BJ (cell line): ENCODE measurements at regions of chr9 and their contacts with region 1.

Region 1: GRCh38 chr9:73081979-73082657 is 69.5 kb upstream of the ANXA1 start:
- DNase-seq: no peak
- H3K4me3 ChIP-seq: no peak overlapping the region
- H3K27me3 ChIP-seq: no peaks in the 10 kb centered on the region
- CTCF ChIP-seq: peak; percentile 83

Region 2: GRCh38 chr9:72856972-72857623 is 225.0 kb before region 1 on chr9:
- CTCF ChIA-PET with region 1: interaction called, 58 read pairs
- POLR2A ChIA-PET with region 1: no interaction called
- DNase-seq: no peak
- H3K4me3 ChIP-seq: no peak overlapping the region
- H3K27me3 ChIP-seq: no peaks in the 10 kb centered on the region
- CTCF ChIP-seq: peak; percentile 71

Region 3: DNA sequence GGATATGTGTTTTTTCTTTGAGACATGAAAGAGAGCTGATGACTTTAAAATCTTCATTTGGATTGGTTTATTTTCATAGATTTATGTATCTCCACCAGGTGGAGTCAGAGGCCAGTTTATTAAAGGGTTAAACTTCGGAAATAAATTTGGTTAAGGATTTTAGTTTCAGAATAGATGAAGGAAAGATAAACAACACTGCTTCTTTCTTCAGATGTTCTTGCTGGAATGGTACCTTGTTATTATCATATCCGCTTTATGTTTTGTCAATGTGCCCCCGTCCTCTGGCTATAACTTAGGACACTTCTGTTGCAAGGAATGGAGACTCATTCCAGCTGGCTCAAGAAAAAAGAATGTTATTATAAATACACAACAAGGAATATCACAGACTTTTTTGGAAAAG is 210.4 kb before region 1 on chr9:
- CTCF ChIA-PET with region 1: interaction called, 21 read pairs
- POLR2A ChIA-PET with region 1: no interaction called
- DNase-seq: no peak
- H3K4me3 ChIP-seq: no peak overlapping the region
- H3K27me3 ChIP-seq: no peaks in the 10 kb centered on the region
- CTCF ChIP-seq: peak; percentile 44; the same call in 1 of the 2 replicates

Region 4: GRCh38 chr9:73037613-73038012 is 44.5 kb before region 1 on chr9:
- CTCF ChIA-PET with region 1: interaction called, 13 read pairs
- POLR2A ChIA-PET with region 1: no interaction called
- DNase-seq: no peak
- H3K4me3 ChIP-seq: no peak overlapping the region
- H3K27me3 ChIP-seq: no peaks in the 10 kb centered on the region
- CTCF ChIP-seq: no peak

Region 5: DNA sequence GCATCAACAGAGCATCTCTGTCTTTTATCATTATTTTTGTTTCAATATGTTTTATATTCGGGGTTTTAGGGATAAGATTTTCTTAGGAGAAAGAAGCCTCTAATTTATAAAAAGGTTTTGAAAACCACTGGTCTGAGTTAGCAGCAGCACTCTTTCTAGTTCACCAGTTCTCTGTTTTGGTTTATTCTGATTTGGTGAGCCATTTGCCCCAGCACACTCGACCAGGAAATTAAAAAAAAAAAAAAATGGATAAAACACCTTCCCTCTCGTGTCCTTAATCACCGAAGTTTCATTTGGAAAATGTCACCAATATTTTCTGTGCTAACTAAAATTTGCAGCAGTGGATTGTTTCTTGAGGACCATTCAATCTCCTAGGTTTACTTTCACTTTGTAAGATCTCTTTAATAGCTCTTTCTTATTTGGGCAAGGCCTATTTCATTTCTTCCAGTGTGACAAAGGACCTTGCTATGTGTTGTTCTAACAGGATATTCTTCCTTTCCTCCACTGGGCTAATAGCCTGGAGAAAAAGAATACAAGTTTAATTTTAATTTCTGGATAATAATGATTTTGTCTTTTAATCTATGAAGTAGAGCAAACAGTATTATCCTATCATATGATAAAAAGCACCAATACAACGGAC is 11.7 kb after region 1 on chr9:
- CTCF ChIA-PET with region 1: interaction called, 14 read pairs
- POLR2A ChIA-PET with region 1: no interaction called
- DNase-seq: no peak
- H3K4me3 ChIP-seq: no peak overlapping the region
- H3K27me3 ChIP-seq: no peaks in the 10 kb centered on the region
- CTCF ChIP-seq: no peak